Activated CD8-positive, alpha-beta T cell treated with anti-CD3 and anti-CD28 coated beads for 36 hours (primary cell): ENCODE measurements at regions of chr1 and their contacts with region 1.

Region 1: GRCh38 chr1:89762779-89763648 is 57.8 kb upstream of the LRRC8D start:
- DNase-seq: peak; percentile 91
- ATAC-seq: peak; percentile 99
- H3K4me3 Mint-ChIP-seq: peak overlapping the region; percentile 76
- H3K27ac Mint-ChIP-seq: peak overlapping the region; percentile 93
- H3K4me1 Mint-ChIP-seq: peaks cover 53% of the 10 kb centered on the region
- H3K27me3 Mint-ChIP-seq: no peaks in the 10 kb centered on the region
- CTCF ChIP-seq: peak; percentile 99

Region 2: GRCh38 chr1:89590415-89591080 is 172.5 kb before region 1 on chr1:
- CTCF ChIA-PET with region 1: interaction called, 11 read pairs
- POLR2A ChIA-PET with region 1: no interaction called
- intact Hi-C with region 1: no loop called
- DNase-seq: peak; percentile 31
- ATAC-seq: peak; percentile 58
- H3K4me3 Mint-ChIP-seq: no peak overlapping the region
- H3K27ac Mint-ChIP-seq: peak overlapping the region; percentile 67
- H3K4me1 Mint-ChIP-seq: peaks cover 76% of the 10 kb centered on the region
- H3K27me3 Mint-ChIP-seq: no peaks in the 10 kb centered on the region
- CTCF ChIP-seq: no peak

Region 3: DNA sequence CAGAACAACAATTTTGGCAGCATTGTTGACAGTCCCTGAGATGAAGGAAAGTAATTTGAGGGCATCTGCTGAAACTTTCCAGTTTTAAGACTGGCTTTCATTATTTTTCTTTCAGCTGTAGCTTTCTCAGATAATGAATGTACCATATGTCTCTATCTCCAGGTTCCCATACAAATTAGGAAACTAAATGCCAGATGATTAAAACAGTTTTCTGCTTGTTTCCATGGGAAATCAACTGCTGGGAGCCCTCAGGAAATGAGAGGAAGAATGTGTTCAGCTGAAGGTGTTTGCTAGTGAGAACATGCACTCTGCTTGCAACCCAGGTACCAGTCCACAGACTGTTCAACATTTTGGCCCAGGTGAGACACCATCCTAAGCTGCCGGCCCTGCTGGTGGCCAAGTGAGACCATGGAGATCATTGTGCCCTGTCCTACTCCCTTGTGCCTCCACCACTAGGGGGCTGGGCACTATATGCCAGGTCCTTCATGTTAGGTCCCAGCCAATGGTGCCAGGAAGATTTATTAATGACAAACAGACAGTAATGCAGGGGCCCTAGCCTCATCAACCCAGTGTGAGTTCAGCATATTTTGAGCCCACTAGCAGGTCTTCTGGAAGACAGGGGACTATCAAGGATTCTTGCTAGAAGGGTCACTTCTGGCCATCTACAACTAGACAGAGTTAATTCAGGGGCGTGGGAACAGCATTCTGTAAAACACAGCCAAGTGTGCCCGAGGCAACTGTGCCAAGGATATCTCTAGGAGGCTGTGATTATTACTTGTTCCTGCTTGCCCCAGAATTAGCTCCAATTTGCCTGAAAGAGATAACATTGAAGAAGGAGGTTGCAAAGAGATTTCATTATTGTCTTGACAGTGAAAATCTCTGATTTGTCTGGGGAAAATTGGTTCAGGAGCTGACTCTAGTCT is 147.1 kb before region 1 on chr1:
- CTCF ChIA-PET with region 1: interaction called, 41 read pairs
- POLR2A ChIA-PET with region 1: interaction called, 29 read pairs
- intact Hi-C with region 1: no loop called
- DNase-seq: peak; percentile 48
- ATAC-seq: no peak
- H3K4me3 Mint-ChIP-seq: no peak overlapping the region
- H3K27ac Mint-ChIP-seq: no peak overlapping the region
- H3K4me1 Mint-ChIP-seq: peaks cover 70% of the 10 kb centered on the region
- H3K27me3 Mint-ChIP-seq: no peaks in the 10 kb centered on the region
- CTCF ChIP-seq: peak; percentile 54

Region 4: GRCh38 chr1:89649783-89650182 is 113.2 kb before region 1 on chr1:
- CTCF ChIA-PET with region 1: interaction called, 58 read pairs
- POLR2A ChIA-PET with region 1: interaction called, 4 read pairs
- intact Hi-C with region 1: no loop called
- DNase-seq: no peak
- ATAC-seq: peak; percentile 32
- H3K4me3 Mint-ChIP-seq: no peak overlapping the region
- H3K27ac Mint-ChIP-seq: peak overlapping the region; percentile 85
- H3K4me1 Mint-ChIP-seq: peaks cover 73% of the 10 kb centered on the region
- H3K27me3 Mint-ChIP-seq: no peaks in the 10 kb centered on the region
- CTCF ChIP-seq: no peak

Region 5: GRCh38 chr1:89692601-89693521 is 70.2 kb before region 1 on chr1:
- CTCF ChIA-PET with region 1: interaction called, 19 read pairs
- POLR2A ChIA-PET with region 1: no interaction called
- intact Hi-C with region 1: no loop called
- DNase-seq: peak; percentile 41
- ATAC-seq: peak; percentile 47
- H3K4me3 Mint-ChIP-seq: peak overlapping the region; percentile 3
- H3K27ac Mint-ChIP-seq: peak overlapping the region; percentile 84
- H3K4me1 Mint-ChIP-seq: peaks cover 83% of the 10 kb centered on the region
- H3K27me3 Mint-ChIP-seq: no peaks in the 10 kb centered on the region
- CTCF ChIP-seq: no peak

Region 6: GRCh38 chr1:89719502-89720306 is 43.3 kb before region 1 on chr1:
- CTCF ChIA-PET with region 1: interaction called, 72 read pairs
- POLR2A ChIA-PET with region 1: interaction called, 15 read pairs
- intact Hi-C with region 1: loop called (anchors 2 kb)
- DNase-seq: peak; percentile 33
- ATAC-seq: peak; percentile 80
- H3K4me3 Mint-ChIP-seq: peak overlapping the region; percentile 53
- H3K27ac Mint-ChIP-seq: peak overlapping the region; percentile 98
- H3K4me1 Mint-ChIP-seq: peaks cover 90% of the 10 kb centered on the region
- H3K27me3 Mint-ChIP-seq: no peaks in the 10 kb centered on the region
- CTCF ChIP-seq: peak; percentile 50

Region 7: GRCh38 chr1:89780721-89781120 is 17.7 kb after region 1 on chr1:
- CTCF ChIA-PET with region 1: interaction called, 32 read pairs
- POLR2A ChIA-PET with region 1: interaction called, 15 read pairs
- intact Hi-C with region 1: no loop called
- DNase-seq: peak; percentile 62
- ATAC-seq: peak; percentile 68
- H3K4me3 Mint-ChIP-seq: peak overlapping the region; percentile 36
- H3K27ac Mint-ChIP-seq: peak overlapping the region; percentile 93
- H3K4me1 Mint-ChIP-seq: peaks cover 48% of the 10 kb centered on the region
- H3K27me3 Mint-ChIP-seq: no peaks in the 10 kb centered on the region
- CTCF ChIP-seq: peak; percentile 56